B cell (primary cell): ENCODE measurements at regions of chr21 and their contacts with region 1.

Region 1: GRCh38 chr21:31731802-31732596 is at the start of gene SCAF4:
- DNase-seq: peak; percentile 90
- ATAC-seq: peak; percentile 82
- H3K4me3 ChIP-seq: peak within 1 kb of the TSS; percentile 51 to 89 (median 77)
- H3K4me3 Mint-ChIP-seq: no peak within 1 kb of the TSS
- H3K27ac ChIP-seq: peak within 1 kb of the TSS; percentile 79 to 89
- H3K27ac Mint-ChIP-seq: peak within 1 kb of the TSS; percentile 91
- H3K4me1 ChIP-seq: peaks cover 65 to 68% of the 10 kb centered on the region in 2 donors
- H3K4me1 Mint-ChIP-seq: peaks cover 30% of the 10 kb centered on the region
- H3K27me3 ChIP-seq: no peaks in the 10 kb centered on the region
- H3K27me3 Mint-ChIP-seq: no peaks in the 10 kb centered on the region
- CTCF ChIP-seq: no peak
- total RNA-seq, gene SCAF4: 110 and 116 TPM in 2 replicates

Region 2: DNA sequence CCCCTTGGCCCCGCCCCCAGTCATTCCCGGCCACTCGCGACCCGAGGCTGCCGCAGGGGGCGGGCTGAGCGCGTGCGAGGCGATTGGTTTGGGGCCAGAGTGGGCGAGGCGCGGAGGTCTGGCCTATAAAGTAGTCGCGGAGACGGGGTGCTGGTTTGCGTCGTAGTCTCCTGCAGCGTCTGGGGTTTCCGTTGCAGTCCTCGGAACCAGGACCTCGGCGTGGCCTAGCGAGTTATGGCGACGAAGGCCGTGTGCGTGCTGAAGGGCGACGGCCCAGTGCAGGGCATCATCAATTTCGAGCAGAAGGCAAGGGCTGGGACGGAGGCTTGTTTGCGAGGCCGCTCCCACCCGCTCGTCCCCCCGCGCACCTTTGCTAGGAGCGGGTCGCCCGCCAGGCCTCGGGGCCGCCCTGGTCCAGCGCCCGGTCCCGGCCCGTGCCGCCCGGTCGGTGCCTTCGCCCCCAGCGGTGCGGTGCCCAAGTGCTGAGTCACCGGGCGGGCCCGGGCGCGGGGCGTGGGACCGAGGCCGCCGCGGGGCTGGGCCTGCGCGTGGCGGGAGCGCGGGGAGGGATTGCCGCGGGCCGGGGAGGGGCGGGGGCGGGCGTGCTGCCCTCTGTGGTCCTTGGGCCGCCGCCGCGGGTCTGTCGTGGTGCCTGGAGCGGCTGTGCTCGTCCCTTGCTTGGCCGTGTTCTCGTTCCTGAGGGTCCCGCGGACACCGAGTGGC is 72.3 kb before region 1 on chr21 and contains the start of gene SOD1:
- CTCF ChIA-PET with region 1: no interaction called
- POLR2A ChIA-PET with region 1: no interaction called
- intact Hi-C with region 1: loop called (anchors 1 kb)
- DNase-seq: peak; percentile 95
- ATAC-seq: peak; percentile 97
- H3K4me3 ChIP-seq: peak within 1 kb of the TSS; percentile 68 to 84 (median 74)
- H3K4me3 Mint-ChIP-seq: peak within 1 kb of the TSS; percentile 97
- H3K27ac ChIP-seq: peak within 1 kb of the TSS; percentile 38 to 74
- H3K27ac Mint-ChIP-seq: peak within 1 kb of the TSS; percentile 99
- H3K4me1 ChIP-seq: peaks cover 21 to 23% of the 10 kb centered on the region in 2 donors
- H3K4me1 Mint-ChIP-seq: peaks cover 56% of the 10 kb centered on the region
- H3K27me3 ChIP-seq: no peaks in the 10 kb centered on the region
- H3K27me3 Mint-ChIP-seq: no peaks in the 10 kb centered on the region
- CTCF ChIP-seq: no peak
- total RNA-seq, gene SOD1: 81.4 and 91.2 TPM in 2 replicates

Region 3: GRCh38 chr21:31772674-31773555 is 40.9 kb after region 1 on chr21:
- CTCF ChIA-PET with region 1: interaction called, 9 read pairs
- POLR2A ChIA-PET with region 1: interaction called, 25 read pairs
- intact Hi-C with region 1: loop called (anchors 1 kb)
- DNase-seq: peak; percentile 82
- ATAC-seq: peak; percentile 85
- H3K4me3 ChIP-seq: peak overlapping the region in 3 of 5 experiments; percentile 6 to 34 (median 20)
- H3K4me3 Mint-ChIP-seq: peak overlapping the region; percentile 64
- H3K27ac ChIP-seq: peak overlapping the region; percentile 94 to 96
- H3K27ac Mint-ChIP-seq: peak overlapping the region; percentile 94
- H3K4me1 ChIP-seq: peaks cover 51 to 53% of the 10 kb centered on the region in 2 donors
- H3K4me1 Mint-ChIP-seq: peaks cover 51% of the 10 kb centered on the region
- H3K27me3 ChIP-seq: no peaks in the 10 kb centered on the region
- H3K27me3 Mint-ChIP-seq: no peaks in the 10 kb centered on the region
- CTCF ChIP-seq: no peak

Region 4: GRCh38 chr21:31873696-31874599 is 141.9 kb after region 1 on chr21:
- CTCF ChIA-PET with region 1: no interaction called
- POLR2A ChIA-PET with region 1: no interaction called
- intact Hi-C with region 1: loop called (anchors 1 kb)
- DNase-seq: peak; percentile 58
- ATAC-seq: peak; percentile 57
- H3K4me3 ChIP-seq: peak overlapping the region in 4 of 5 experiments; percentile 32 to 65 (median 50)
- H3K4me3 Mint-ChIP-seq: peak overlapping the region; percentile 57
- H3K27ac ChIP-seq: no peak overlapping the region
- H3K27ac Mint-ChIP-seq: no peak overlapping the region
- H3K4me1 ChIP-seq: peaks cover 14 to 22% of the 10 kb centered on the region in 2 donors
- H3K4me1 Mint-ChIP-seq: peaks cover 10% of the 10 kb centered on the region
- H3K27me3 ChIP-seq: peaks cover 0 to 69% (median 24%) of the 10 kb centered on the region in 4 experiments
- H3K27me3 Mint-ChIP-seq: peaks cover 55% of the 10 kb centered on the region
- CTCF ChIP-seq: peak; percentile 64

Region 5: DNA sequence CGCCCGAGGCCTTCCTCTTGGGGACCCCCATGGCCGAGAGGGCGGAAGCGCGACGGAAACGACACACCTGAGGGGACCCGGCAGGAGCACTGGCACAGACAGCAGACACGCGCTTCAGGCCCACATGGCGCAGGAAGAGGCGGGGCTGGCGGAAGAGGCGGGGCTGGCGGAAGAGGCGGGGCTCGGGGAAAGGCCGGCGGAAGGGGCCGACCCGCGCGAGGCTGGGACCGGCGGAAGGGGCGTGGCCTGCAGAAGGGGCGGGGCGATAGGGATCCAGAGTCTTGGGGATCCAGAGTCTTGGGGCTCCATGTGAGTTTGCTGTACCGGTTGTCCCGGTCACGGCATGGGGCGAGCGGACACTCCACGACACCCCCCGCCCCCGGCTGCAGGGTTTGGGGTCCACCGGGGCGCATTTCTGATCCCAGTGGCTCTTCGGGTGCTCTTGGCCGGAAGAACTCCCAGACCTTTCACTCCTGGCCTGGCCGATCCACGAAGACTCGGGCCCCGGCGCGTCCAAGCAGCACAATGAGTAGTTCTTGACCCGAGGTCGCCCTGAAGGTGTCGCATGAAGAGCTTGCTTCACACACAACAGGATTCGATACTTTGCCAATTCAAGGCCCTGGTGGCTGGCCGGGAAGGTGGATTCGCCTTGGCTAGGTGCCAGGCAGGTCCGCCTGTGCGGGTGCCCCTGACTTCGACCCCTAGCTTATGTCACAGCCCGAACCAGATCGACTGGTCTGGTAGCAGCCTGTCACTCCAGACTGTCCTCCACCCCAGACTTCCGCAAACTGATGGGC is 661.1 kb after region 1 on chr21 and contains the start of gene URB1:
- CTCF ChIA-PET with region 1: no interaction called
- POLR2A ChIA-PET with region 1: no interaction called
- intact Hi-C with region 1: loop called (anchors 2 kb)
- DNase-seq: peak; percentile 93
- ATAC-seq: peak; percentile 96
- H3K4me3 ChIP-seq: peak within 1 kb of the TSS; percentile 67 to 99 (median 95)
- H3K4me3 Mint-ChIP-seq: peak within 1 kb of the TSS; percentile 92
- H3K27ac ChIP-seq: peak within 1 kb of the TSS; percentile 74 to 90
- H3K27ac Mint-ChIP-seq: peak within 1 kb of the TSS; percentile 90
- H3K4me1 ChIP-seq: peaks cover 18 to 24% of the 10 kb centered on the region in 2 donors
- H3K4me1 Mint-ChIP-seq: peaks cover 39% of the 10 kb centered on the region
- H3K27me3 ChIP-seq: peaks cover 0 to 11% (median 6%) of the 10 kb centered on the region in 4 experiments
- H3K27me3 Mint-ChIP-seq: peaks cover 11% of the 10 kb centered on the region
- CTCF ChIP-seq: no peak
- total RNA-seq, gene URB1: 14.9 and 15.2 TPM in 2 replicates

Region 6: DNA sequence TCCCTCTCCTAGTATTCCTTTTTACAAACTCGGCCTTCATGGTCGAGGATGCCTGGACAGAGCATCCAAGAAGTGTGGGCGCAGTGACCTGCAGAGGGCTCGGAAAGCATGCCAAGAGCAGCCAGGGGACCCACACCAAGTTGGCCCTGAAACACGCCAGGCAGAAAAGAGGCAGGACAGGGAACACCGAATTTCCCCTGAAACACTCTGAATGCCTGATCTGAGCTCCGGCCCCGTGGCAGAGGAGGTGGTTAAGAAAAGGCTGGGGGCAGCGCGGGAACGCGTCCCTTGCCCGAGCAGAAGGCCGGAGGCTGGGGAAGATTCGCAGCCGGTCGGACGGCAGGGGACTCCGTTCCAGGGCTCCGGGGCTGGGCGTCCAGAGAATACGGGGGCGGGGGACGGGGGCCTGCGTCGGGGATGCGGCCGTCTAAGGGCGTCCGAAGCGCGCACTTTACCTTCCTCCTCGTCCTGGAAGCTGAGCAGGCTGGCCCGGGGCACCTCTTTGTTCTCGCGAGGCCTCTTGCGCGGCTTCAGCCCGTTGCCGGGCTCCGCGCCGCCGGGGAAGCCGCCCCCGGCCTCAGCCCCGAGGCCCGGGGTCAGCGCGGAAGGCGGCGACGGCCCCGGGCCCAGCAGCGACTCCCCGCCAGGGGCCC is 1039.0 kb after region 1 on chr21:
- CTCF ChIA-PET with region 1: no interaction called
- POLR2A ChIA-PET with region 1: interaction called, 4 read pairs
- intact Hi-C with region 1: loop called (anchors 5 kb)
- DNase-seq: no peak
- ATAC-seq: peak; percentile 40
- H3K4me3 ChIP-seq: peak overlapping the region; percentile 65 to 84 (median 78)
- H3K4me3 Mint-ChIP-seq: peak overlapping the region; percentile 96
- H3K27ac ChIP-seq: peak overlapping the region; percentile 48 to 77
- H3K27ac Mint-ChIP-seq: peak overlapping the region; percentile 93
- H3K4me1 ChIP-seq: peaks cover 12 to 19% of the 10 kb centered on the region in 2 donors
- H3K4me1 Mint-ChIP-seq: peaks cover 50% of the 10 kb centered on the region
- H3K27me3 ChIP-seq: no peaks in the 10 kb centered on the region
- H3K27me3 Mint-ChIP-seq: no peaks in the 10 kb centered on the region
- CTCF ChIP-seq: no peak